Lower leg skin (tissue), 4 donors: ENCODE measurements at regions of chr14 and their contacts with region 1.

Region 1: DNA sequence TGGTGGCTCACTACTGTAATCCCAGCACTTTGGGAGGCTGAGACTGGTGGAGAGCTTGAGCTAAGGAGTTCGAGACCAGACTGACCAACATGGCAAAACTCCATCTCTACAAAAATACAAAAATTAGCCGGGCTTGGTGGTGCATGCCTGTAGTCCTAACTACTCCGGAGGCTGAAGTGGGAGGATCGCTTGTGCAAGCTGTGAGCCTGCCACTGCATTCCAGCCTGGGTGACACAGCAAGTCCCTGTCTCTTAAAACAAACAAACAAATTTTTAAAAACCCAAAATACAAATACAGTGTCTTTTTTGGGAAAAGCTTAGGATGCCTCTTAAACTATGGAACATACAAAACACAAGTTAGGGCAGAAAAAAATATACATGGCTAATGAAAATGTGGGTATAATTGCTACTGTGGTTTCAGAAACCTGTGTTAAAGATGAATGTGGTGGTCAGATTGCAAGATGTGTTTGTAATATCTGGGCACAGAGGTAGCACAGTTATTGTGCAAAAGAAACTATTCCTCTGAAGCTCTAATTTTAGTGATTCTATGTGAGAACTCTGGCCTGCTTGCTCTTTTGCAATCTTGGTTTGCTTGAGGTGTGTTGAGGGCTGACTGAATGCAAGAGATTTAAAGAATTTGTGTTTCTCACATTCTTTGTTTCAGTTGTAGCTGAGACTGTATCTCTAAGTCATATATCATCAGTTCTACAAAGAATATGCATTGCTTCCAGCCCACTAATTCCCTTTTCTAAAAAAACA is 3.9 kb upstream of the HSPA2 start:
- DNase-seq: no peak
- H3K4me3 ChIP-seq: no peak overlapping the region
- CTCF ChIP-seq: no peak
- POLR2A ChIP-seq: no peak

Region 2: DNA sequence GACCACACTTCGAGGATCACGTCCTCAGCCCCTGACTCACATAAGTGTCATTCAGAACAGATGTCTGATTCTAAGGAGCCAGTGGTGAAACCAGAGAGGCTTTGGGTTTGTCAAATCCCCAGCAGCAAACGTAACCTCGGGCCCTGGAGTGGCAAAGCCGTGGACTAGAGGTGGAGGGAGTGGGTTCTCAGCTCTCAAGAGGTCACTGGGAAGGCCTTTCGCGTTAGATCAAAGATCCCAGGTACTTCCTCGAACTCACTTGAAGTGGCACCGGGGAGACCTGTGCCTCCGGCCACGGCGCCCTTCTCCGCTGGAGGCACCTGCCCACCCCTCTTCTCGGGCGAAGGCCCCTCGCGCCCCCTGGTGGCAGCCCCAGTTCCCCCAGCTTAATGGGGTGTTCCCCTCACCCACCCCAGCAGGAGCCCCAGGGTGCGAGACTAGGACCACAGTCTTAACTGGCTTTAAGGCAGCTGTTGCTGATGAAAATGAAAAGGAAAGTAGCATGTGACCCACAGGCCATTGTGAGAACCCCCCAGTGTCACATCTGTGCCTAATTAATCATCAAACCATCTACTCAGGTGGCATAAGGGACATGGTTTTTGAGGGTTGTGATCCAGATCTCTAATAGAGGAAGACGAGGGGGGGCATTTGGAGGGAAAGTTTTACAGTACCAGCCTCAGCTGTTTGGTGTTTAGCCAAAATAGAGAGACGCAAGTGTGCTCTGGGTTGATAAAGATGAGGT is 241.8 kb before region 1 on chr14:
- intact Hi-C with region 1: no loop called
- DNase-seq: peak in 1 of 2 donors; percentile 90
- H3K4me3 ChIP-seq: peak overlapping the region; percentile 22
- CTCF ChIP-seq: no peak
- POLR2A ChIP-seq: no peak

Region 3: GRCh38 chr14:64636208-64636979 is 99.7 kb after region 1 on chr14:
- intact Hi-C with region 1: loop called (anchors 5 kb)
- DNase-seq: peak; percentile 46 to 94
- H3K4me3 ChIP-seq: no peak overlapping the region
- CTCF ChIP-seq: peak in 1 of 3 donors; percentile 36
- POLR2A ChIP-seq: no peak